Naive thymus-derived CD4-positive, alpha-beta T cell (primary cell): ENCODE measurements at regions of chr9 and their contacts with region 1.

Region 1: DNA sequence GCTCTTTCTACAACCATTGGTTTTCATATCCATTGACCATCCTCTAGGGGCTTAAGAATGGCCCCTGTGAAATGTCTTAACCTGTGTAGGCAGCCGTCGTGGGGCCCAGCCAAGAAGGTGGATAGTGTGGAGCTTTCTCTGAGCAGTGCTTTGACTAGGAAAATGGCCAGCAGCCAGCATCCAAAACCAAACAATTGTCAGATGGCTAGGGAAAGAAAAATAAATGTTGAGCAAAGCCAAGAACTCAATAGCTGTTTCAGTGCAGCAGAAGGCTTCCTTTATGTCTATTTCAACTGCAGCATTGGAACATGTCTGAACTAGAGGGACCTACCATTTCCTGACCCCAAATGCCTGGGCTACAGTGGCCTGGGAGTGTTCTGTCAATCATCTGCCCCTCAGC is 374.9 kb downstream of the TLE4 start:
- DNase-seq: no peak
- ATAC-seq: no peak
- H3K4me3 ChIP-seq: no peak overlapping the region
- H3K4me3 Mint-ChIP-seq: no peak overlapping the region
- H3K27ac ChIP-seq: no peak overlapping the region
- H3K27ac Mint-ChIP-seq: no peak overlapping the region
- H3K4me1 ChIP-seq: no peaks in the 10 kb centered on the region
- H3K4me1 Mint-ChIP-seq: no peaks in the 10 kb centered on the region
- H3K27me3 ChIP-seq: no peaks in the 10 kb centered on the region
- H3K27me3 Mint-ChIP-seq: no peaks in the 10 kb centered on the region

Region 2: GRCh38 chr9:79403495-79403894 is 543.2 kb before region 1 on chr9:
- CTCF ChIA-PET with region 1: no interaction called
- POLR2A ChIA-PET with region 1: no interaction called
- intact Hi-C with region 1: loop called in 1 of 2 experiments (anchors 1 kb)
- DNase-seq: peak in 3 of 9 donors; percentile 10 to 20 (median 14)
- ATAC-seq: no peak
- H3K4me3 ChIP-seq: no peak overlapping the region
- H3K4me3 Mint-ChIP-seq: no peak overlapping the region
- H3K27ac ChIP-seq: no peak overlapping the region
- H3K27ac Mint-ChIP-seq: no peak overlapping the region
- H3K4me1 ChIP-seq: no peaks in the 10 kb centered on the region
- H3K4me1 Mint-ChIP-seq: no peaks in the 10 kb centered on the region
- H3K27me3 ChIP-seq: no peaks in the 10 kb centered on the region
- H3K27me3 Mint-ChIP-seq: peaks cover 0 to 5% (median 0%) of the 10 kb centered on the region in 5 donors

Region 3: GRCh38 chr9:79471580-79472543 is 474.9 kb before region 1 on chr9:
- CTCF ChIA-PET with region 1: interaction called, 3 read pairs
- POLR2A ChIA-PET with region 1: no interaction called
- intact Hi-C with region 1: loop called in 1 of 2 experiments (anchors 1 kb)
- DNase-seq: peak in 6 of 9 donors; percentile 12 to 43 (median 18)
- ATAC-seq: peak; percentile 56
- H3K4me3 ChIP-seq: no peak overlapping the region
- H3K4me3 Mint-ChIP-seq: no peak overlapping the region
- H3K27ac ChIP-seq: no peak overlapping the region
- H3K27ac Mint-ChIP-seq: peak overlapping the region in 3 of 9 donors; percentile 44 to 75 (median 45)
- H3K4me1 ChIP-seq: peaks cover 0 to 8% of the 10 kb centered on the region in 2 donors
- H3K4me1 Mint-ChIP-seq: peaks cover 0 to 30% (median 24%) of the 10 kb centered on the region in 7 donors
- H3K27me3 ChIP-seq: no peaks in the 10 kb centered on the region
- H3K27me3 Mint-ChIP-seq: no peaks in the 10 kb centered on the region

Region 4: GRCh38 chr9:79477955-79478771 is 468.5 kb before region 1 on chr9:
- CTCF ChIA-PET with region 1: interaction called, 3 read pairs
- POLR2A ChIA-PET with region 1: no interaction called
- intact Hi-C with region 1: loop called in 1 of 2 experiments (anchors 1 kb)
- DNase-seq: peak in 6 of 9 donors; percentile 12 to 37 (median 22)
- ATAC-seq: peak; percentile 58
- H3K4me3 ChIP-seq: no peak overlapping the region
- H3K4me3 Mint-ChIP-seq: no peak overlapping the region
- H3K27ac ChIP-seq: no peak overlapping the region
- H3K27ac Mint-ChIP-seq: no peak overlapping the region
- H3K4me1 ChIP-seq: peaks cover 0 to 3% of the 10 kb centered on the region in 2 donors
- H3K4me1 Mint-ChIP-seq: peaks cover 0 to 5% (median 0%) of the 10 kb centered on the region in 7 donors
- H3K27me3 ChIP-seq: no peaks in the 10 kb centered on the region
- H3K27me3 Mint-ChIP-seq: no peaks in the 10 kb centered on the region

Region 5: DNA sequence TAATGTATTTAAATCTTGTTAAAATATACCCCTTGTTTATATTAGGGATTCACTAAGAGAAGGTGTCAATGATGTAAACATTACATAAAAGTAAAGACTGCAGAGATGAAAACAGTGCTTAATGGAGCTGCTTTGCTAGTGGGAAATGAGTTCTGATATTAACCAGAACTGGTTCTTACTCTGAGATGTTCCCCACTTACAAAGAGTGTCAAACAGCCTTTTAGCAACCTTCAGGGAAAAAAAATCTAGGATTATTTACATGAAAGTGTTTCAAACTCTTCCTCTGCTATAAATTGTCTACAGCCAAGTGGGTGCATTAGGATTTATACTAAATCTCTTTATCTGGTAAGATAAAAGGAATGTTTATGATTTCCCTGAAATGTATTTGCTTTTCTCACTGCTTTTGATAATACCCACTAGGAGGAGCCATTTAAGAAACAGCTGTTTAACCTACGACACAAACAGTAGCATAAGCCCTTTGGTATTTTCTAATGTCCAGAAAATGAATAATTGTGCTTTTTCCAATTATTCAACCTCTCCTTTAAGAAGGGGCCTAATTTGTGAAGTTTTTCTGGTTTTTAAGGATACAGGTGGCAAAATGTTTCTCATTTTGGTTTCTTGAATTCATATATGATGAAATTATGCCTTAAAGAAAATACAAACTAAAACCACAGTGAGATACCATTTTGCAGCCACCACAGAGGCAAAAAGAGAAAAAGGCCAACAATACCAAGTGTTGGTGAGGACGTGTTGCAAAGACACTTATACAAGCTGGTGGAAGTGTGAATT is 188.6 kb before region 1 on chr9:
- CTCF ChIA-PET with region 1: no interaction called
- POLR2A ChIA-PET with region 1: no interaction called
- intact Hi-C with region 1: loop called in 1 of 2 experiments (anchors 1 kb)
- DNase-seq: peak in 2 of 9 donors; percentile 3 to 11
- ATAC-seq: no peak
- H3K4me3 ChIP-seq: no peak overlapping the region
- H3K4me3 Mint-ChIP-seq: no peak overlapping the region
- H3K27ac ChIP-seq: no peak overlapping the region
- H3K27ac Mint-ChIP-seq: no peak overlapping the region
- H3K4me1 ChIP-seq: no peaks in the 10 kb centered on the region
- H3K4me1 Mint-ChIP-seq: peaks cover 0 to 4% (median 0%) of the 10 kb centered on the region in 7 donors
- H3K27me3 ChIP-seq: no peaks in the 10 kb centered on the region
- H3K27me3 Mint-ChIP-seq: peaks cover 0 to 2% (median 0%) of the 10 kb centered on the region in 5 donors

Region 6: GRCh38 chr9:79962836-79963235 is 16.1 kb after region 1 on chr9:
- CTCF ChIA-PET with region 1: no interaction called
- POLR2A ChIA-PET with region 1: no interaction called
- intact Hi-C with region 1: no loop called
- DNase-seq: no peak
- ATAC-seq: no peak
- H3K4me3 ChIP-seq: no peak overlapping the region
- H3K4me3 Mint-ChIP-seq: no peak overlapping the region
- H3K27ac ChIP-seq: no peak overlapping the region
- H3K27ac Mint-ChIP-seq: no peak overlapping the region
- H3K4me1 ChIP-seq: no peaks in the 10 kb centered on the region
- H3K4me1 Mint-ChIP-seq: no peaks in the 10 kb centered on the region
- H3K27me3 ChIP-seq: no peaks in the 10 kb centered on the region
- H3K27me3 Mint-ChIP-seq: peaks cover 1 to 11% (median 5%) of the 10 kb centered on the region in 5 donors